ENCODE measurements at regions of chr1 and their contacts with region 1.

Region 1: GRCh38 chr1:25520446-25521061 is 22.9 kb upstream of the LDLRAP1 start:
- DNase-seq: peak; percentile 22 to 86 (median 66)
- ATAC-seq: peak; percentile 71 to 84 (median 74)
- H3K4me3 ChIP-seq: no peak overlapping the region
- H3K4me3 Mint-ChIP-seq: no peak overlapping the region
- H3K27ac ChIP-seq: no peak overlapping the region
- H3K27ac Mint-ChIP-seq: peak overlapping the region; percentile 70 to 91
- H3K4me1 ChIP-seq: peaks cover 0 to 4% of the 10 kb centered on the region in 2 experiments
- H3K4me1 Mint-ChIP-seq: peaks cover 5 to 11% (median 10%) of the 10 kb centered on the region in 3 donors
- H3K27me3 ChIP-seq: peaks cover 0 to 5% of the 10 kb centered on the region in 2 experiments
- H3K27me3 Mint-ChIP-seq: peaks cover 0 to 1% of the 10 kb centered on the region in 2 donors

Region 2: DNA sequence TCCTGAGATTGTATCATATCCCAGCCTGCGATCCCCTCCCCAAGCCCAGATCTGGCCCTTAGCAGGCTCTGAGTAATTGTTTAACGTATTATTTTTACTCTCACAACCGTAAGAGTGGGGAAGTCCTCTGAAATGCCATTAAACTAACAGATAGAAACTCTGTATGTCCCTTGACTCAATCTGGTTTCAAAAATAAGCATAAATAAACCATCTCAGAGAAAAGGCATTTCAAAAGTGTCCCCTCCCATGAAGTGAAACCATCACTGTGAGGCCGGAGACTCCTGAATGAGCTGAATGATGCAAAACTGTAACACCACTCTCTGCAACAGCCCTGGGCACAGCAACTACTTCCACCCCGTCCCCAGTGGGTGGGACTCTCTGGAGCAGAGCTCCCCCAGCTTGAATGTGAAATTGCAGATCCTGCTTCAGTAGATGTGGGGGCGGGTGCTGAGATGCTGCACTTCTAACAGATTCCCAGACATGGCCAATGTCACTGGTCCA is 392.4 kb before region 1 on chr1:
- CTCF ChIA-PET with region 1: no interaction called
- POLR2A ChIA-PET with region 1: no interaction called
- DNase-seq: no peak
- ATAC-seq: no peak
- H3K4me3 ChIP-seq: no peak overlapping the region
- H3K4me3 Mint-ChIP-seq: no peak overlapping the region
- H3K27ac ChIP-seq: no peak overlapping the region
- H3K27ac Mint-ChIP-seq: no peak overlapping the region
- H3K4me1 ChIP-seq: no peaks in the 10 kb centered on the region
- H3K4me1 Mint-ChIP-seq: no peaks in the 10 kb centered on the region
- H3K27me3 ChIP-seq: peaks cover 0 to 12% of the 10 kb centered on the region in 2 experiments
- H3K27me3 Mint-ChIP-seq: peaks cover 3 to 5% of the 10 kb centered on the region in 2 donors

Region 3: DNA sequence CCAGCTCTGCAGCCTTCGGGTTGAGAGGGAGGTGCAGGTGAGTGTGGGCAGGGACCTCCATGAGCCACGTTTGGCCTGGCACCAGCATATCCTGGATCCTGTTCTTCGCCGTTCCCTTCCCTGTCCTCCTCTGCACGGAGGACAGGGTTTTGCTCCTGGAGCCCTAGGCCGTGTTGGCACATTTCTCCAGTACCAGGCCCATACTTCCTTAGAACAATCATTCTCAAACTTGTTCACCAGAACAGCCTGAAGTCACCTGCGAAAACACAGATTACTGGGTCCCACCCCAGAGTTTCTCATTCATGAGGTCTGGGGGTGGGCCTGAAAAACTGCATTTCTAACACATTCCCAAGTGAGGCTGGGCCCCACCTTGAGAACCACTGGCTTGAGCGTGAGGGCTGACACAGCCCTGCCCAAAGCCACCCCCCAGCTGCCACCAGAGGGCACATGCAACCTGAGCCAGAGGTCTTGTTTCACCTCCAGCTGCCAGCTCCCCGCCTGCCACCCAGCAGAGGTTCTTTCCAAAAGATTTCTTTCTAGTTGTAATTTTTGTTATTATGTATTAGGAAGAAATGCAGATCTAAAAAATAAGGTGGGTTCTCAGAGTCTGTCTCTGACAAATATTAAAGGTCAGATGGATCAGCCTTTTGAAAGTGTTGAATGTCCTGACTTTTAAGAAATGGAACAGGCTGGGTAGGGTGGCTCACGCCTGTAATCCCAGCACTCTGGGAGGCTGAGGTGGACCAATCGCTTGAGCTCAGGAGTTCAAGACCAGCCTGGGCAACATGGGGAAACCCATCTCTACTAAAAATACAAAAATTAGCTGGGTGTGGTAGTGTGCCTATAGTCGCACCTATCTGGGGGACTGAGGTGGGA is 16.8 kb before region 1 on chr1:
- CTCF ChIA-PET with region 1: interaction called, 11 to 17 read pairs
- POLR2A ChIA-PET with region 1: interaction called in 1 of 2 experiments, 5 read pairs
- DNase-seq: peak; percentile 55 to 83 (median 73)
- ATAC-seq: peak; percentile 94 to 98 (median 96)
- H3K4me3 ChIP-seq: no peak overlapping the region
- H3K4me3 Mint-ChIP-seq: no peak overlapping the region
- H3K27ac ChIP-seq: no peak overlapping the region
- H3K27ac Mint-ChIP-seq: peak overlapping the region; percentile 77 to 80
- H3K4me1 ChIP-seq: peaks cover 8 to 26% of the 10 kb centered on the region in 2 experiments
- H3K4me1 Mint-ChIP-seq: peaks cover 24 to 34% (median 32%) of the 10 kb centered on the region in 3 donors
- H3K27me3 ChIP-seq: no peaks in the 10 kb centered on the region
- H3K27me3 Mint-ChIP-seq: no peaks in the 10 kb centered on the region

Region 4: GRCh38 chr1:25715888-25716287 is 195.3 kb after region 1 on chr1:
- CTCF ChIA-PET with region 1: no interaction called
- POLR2A ChIA-PET with region 1: no interaction called
- DNase-seq: no peak
- ATAC-seq: no peak
- H3K4me3 ChIP-seq: no peak overlapping the region
- H3K4me3 Mint-ChIP-seq: no peak overlapping the region
- H3K27ac ChIP-seq: no peak overlapping the region
- H3K27ac Mint-ChIP-seq: peak overlapping the region in 1 of 2 donors; percentile 7
- H3K4me1 ChIP-seq: peaks cover 16 to 28% of the 10 kb centered on the region in 2 experiments
- H3K4me1 Mint-ChIP-seq: peaks cover 63 to 69% (median 66%) of the 10 kb centered on the region in 3 donors
- H3K27me3 ChIP-seq: no peaks in the 10 kb centered on the region
- H3K27me3 Mint-ChIP-seq: no peaks in the 10 kb centered on the region